ENCODE measurements at regions of chr7 and their contacts with region 1.

Region 1: GRCh38 chr7:107462740-107463444 is 7.0 kb upstream of the GPR22 start:
- DNase-seq: peak in 3 of 4 donors; percentile 34 to 74 (median 38)
- ATAC-seq: peak; percentile 94
- H3K4me3 ChIP-seq: no peak overlapping the region
- H3K27ac ChIP-seq: no peak overlapping the region
- H3K4me1 ChIP-seq: no peaks in the 10 kb centered on the region
- H3K27me3 ChIP-seq: no peaks in the 10 kb centered on the region
- CTCF ChIP-seq: peak; percentile 62 to 63

Region 2: DNA sequence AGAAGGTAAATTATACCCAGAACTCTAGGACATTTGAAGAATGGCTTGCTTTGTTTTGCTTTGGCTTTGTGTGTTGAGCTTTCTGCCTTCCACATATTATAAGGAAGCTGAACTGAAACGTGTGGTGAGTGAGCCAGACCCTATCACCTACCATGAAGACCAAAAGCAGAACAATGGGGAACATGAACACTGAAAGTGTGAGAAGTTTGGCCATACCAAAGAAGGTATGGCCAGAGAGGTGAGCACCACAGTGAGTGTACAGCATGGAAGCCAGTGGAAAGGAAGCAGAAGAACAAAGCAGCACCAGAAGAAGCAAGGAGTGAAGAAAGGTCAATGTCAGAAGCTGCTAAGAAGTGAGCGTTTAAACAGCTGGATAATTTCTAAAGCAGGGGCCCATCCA is 742.3 kb before region 1 on chr7:
- intact Hi-C with region 1: no loop called
- DNase-seq: no peak
- ATAC-seq: no peak
- H3K4me3 ChIP-seq: no peak overlapping the region
- H3K27ac ChIP-seq: no peak overlapping the region
- H3K4me1 ChIP-seq: peaks cover 9 to 30% of the 10 kb centered on the region in 2 donors
- H3K27me3 ChIP-seq: no peaks in the 10 kb centered on the region
- CTCF ChIP-seq: no peak

Region 3: DNA sequence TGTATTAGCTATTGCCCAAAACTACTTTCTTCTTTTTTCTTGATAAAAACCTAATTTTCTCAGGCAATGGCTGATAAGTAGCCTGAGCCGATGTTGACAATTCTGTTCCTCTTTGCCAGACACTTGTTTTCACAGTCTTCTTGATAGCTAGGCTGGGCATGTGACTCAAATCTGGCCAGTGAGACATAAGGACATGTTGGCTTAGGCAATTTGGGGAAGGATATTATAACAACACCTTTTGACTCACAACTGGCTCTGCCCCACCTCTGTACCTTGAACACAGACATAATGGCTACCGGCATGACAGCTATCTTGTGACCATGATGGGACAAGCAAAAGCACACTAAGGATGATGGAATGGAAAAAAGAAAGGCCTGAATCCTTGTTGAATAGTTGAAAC is 65.9 kb before region 1 on chr7:
- intact Hi-C with region 1: no loop called
- DNase-seq: no peak
- ATAC-seq: no peak
- H3K4me3 ChIP-seq: no peak overlapping the region
- H3K27ac ChIP-seq: no peak overlapping the region
- H3K4me1 ChIP-seq: no peaks in the 10 kb centered on the region
- H3K27me3 ChIP-seq: no peaks in the 10 kb centered on the region
- CTCF ChIP-seq: no peak

Region 4: GRCh38 chr7:107725151-107725740 is 262.4 kb after region 1 on chr7:
- intact Hi-C with region 1: loop called in 1 of 2 experiments (anchors 5 kb)
- DNase-seq: peak in 2 of 4 donors; percentile 30 to 65
- ATAC-seq: peak; percentile 72
- H3K4me3 ChIP-seq: no peak overlapping the region
- H3K27ac ChIP-seq: no peak overlapping the region
- H3K4me1 ChIP-seq: no peaks in the 10 kb centered on the region
- H3K27me3 ChIP-seq: peaks cover 4 to 9% of the 10 kb centered on the region in 2 donors
- CTCF ChIP-seq: peak; percentile 51 to 59

Region 5: GRCh38 chr7:107743567-107744344 is 280.9 kb after region 1 on chr7 and contains the start of gene CBLL1:
- intact Hi-C with region 1: no loop called
- DNase-seq: peak; percentile 97 to 99 (median 97)
- ATAC-seq: peak; percentile 98
- H3K4me3 ChIP-seq: peak within 1 kb of the TSS; percentile 88 to 97
- H3K27ac ChIP-seq: peak within 1 kb of the TSS; percentile 98 to 99
- H3K4me1 ChIP-seq: peaks cover 17 to 48% of the 10 kb centered on the region in 2 donors
- H3K27me3 ChIP-seq: no peaks in the 10 kb centered on the region
- CTCF ChIP-seq: peak; percentile 48 to 58
- polyA plus RNA-seq, gene CBLL1: 27.7 to 31.8 (median 29.0) TPM